H1 (cell line): ENCODE measurements at regions of chr10 and their contacts with region 1.

Region 1: DNA sequence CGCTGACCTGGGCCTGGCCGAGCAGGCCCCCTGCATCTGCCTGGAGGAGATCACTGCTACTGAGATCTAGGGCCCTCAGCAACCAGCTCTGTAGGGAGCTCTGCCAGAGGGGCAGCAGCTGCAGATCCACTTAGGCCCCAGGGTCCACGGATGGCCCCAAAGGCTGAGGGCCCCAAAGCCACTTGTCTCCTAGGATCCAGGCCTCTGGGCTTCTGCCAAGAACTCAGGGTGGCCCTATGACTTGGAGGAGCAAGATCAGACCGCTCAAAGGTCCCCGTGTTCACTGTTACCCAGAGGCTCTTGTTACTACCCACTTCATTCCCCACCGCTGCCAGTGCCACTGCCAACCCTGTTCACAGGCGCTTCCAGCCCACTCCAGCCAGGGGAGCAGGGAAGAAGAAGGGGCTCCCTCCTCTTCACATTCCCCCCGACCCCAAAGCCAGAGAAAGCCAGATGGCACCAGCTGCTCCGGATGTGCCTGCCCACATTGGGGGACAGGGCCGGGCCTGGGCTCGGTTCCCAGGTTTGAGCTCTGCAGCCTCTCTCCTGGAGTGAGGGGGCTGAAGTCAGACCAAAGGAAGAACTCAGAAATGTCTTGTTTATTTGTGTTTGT is 7.6 kb downstream of the LZTS2 start:
- DNase-seq: no peak
- H3K4me3 ChIP-seq: no peak overlapping the region
- H3K27ac ChIP-seq: no peak overlapping the region
- H3K4me1 ChIP-seq: peaks cover 0 to 12% (median 5%) of the 10 kb centered on the region in 4 experiments; a peak in 5 of 7 replicates
- H3K27me3 ChIP-seq: no peaks in the 10 kb centered on the region
- CTCF ChIP-seq: no peak
- EP300 ChIP-seq: no peak
- POLR2A ChIP-seq: no peak
- RAD21 ChIP-seq: no peak

Region 2: DNA sequence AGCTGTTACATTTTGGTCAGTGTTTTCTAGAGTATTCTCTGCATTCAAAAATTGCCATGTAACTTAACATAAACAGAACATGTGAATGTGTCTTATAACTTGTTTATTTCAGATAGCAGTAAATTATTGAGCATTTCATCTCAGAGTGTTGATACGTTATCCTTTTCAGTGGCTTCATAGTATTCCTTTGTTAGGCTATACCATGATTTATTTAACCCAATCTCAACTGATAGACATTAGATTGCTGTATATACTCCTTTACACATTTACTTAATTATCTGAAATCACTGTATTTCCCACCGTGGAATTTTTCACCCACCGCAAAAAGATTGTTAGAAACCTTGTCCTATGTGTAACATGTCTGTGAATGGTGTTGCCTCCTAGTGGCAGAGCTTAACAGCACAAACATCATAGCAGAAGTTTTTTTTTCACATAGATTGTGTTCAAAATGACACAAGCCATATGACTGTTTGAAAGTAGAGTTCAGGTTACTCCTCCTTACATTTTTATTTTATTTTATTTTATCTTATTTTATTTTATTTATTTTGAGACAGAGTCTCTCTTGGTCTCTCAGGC is 73.0 kb before region 1 on chr10:
- CTCF ChIA-PET with region 1: no interaction called
- POLR2A ChIA-PET with region 1: no interaction called
- DNase-seq: no peak
- H3K4me3 ChIP-seq: no peak overlapping the region
- H3K27ac ChIP-seq: no peak overlapping the region
- H3K4me1 ChIP-seq: no peaks in the 10 kb centered on the region
- H3K27me3 ChIP-seq: no peaks in the 10 kb centered on the region
- CTCF ChIP-seq: peak in 2 of 3 experiments; percentile 36 to 70; a peak in 2 of 4 replicates
- EP300 ChIP-seq: no peak
- POLR2A ChIP-seq: no peak
- RAD21 ChIP-seq: peak in 1 of 2 experiments; percentile 19; a peak in 2 of 4 replicates

Region 3: DNA sequence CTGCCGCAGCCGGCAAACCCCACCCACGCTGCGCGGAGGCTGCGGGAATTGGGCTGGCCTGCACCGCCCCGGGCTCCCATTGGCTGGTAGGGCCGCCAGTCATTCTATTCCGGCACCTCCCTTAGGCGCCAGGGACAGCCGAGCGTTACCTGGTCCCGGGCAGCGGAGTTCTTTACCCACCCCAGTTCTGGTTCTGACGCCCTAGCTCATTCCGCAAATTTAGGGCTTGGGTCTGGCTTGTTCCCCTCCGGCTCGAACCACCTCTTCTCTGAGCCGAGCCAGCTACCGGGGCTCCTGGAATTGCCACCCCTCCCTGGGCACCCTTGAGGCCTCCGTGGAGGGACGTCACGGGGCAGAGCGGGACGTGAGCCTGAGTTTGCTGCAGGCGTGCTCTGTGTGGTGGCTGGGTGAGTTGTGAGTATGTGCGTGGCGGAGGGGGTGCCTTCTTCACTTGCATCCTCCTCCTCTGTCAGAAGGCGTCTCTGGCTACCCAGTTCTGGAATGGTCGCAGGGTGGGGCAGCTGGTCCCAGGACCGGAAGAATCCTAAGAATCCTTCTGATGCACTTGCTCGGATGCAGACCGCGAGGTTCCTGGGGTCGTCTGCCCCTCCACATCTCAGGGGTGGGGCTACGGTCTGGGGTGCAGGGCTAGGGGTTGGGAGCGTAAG is 24.1 kb after region 1 on chr10 and contains the starts of genes PDZD7 and SFXN3:
- CTCF ChIA-PET with region 1: interaction called, 28 read pairs
- POLR2A ChIA-PET with region 1: interaction called, 7 read pairs
- DNase-seq: peak in 1 of 2 experiments; percentile 98
- H3K4me3 ChIP-seq: peak within 1 kb of the TSS; percentile 41 to 66 (median 58)
- H3K27ac ChIP-seq: no peak within 1 kb of the TSS
- H3K4me1 ChIP-seq: peaks cover 0 to 26% (median 21%) of the 10 kb centered on the region in 4 experiments; a peak in 6 of 7 replicates
- H3K27me3 ChIP-seq: peaks cover 1 to 45% (median 36%) of the 10 kb centered on the region in 4 experiments
- CTCF ChIP-seq: no peak
- EP300 ChIP-seq: no peak
- POLR2A ChIP-seq: no peak
- RAD21 ChIP-seq: no peak
- total RNA-seq, gene PDZD7: 0.88 and 1.1 TPM in 2 replicates
- total RNA-seq, gene SFXN3: 2.8 and 3.1 TPM in 2 replicates

Region 4: GRCh38 chr10:101103430-101103829 is 96.2 kb after region 1 on chr10:
- CTCF ChIA-PET with region 1: no interaction called
- POLR2A ChIA-PET with region 1: no interaction called
- DNase-seq: no peak
- H3K4me3 ChIP-seq: no peak overlapping the region
- H3K27ac ChIP-seq: no peak overlapping the region
- H3K4me1 ChIP-seq: no peaks in the 10 kb centered on the region
- H3K27me3 ChIP-seq: peaks cover 0 to 26% (median 10%) of the 10 kb centered on the region in 4 experiments; a peak in 5 of 7 replicates
- CTCF ChIP-seq: no peak
- EP300 ChIP-seq: no peak
- POLR2A ChIP-seq: no peak
- RAD21 ChIP-seq: no peak